ENCODE measurements at regions of chr12 and their contacts with region 1.

Region 1: DNA sequence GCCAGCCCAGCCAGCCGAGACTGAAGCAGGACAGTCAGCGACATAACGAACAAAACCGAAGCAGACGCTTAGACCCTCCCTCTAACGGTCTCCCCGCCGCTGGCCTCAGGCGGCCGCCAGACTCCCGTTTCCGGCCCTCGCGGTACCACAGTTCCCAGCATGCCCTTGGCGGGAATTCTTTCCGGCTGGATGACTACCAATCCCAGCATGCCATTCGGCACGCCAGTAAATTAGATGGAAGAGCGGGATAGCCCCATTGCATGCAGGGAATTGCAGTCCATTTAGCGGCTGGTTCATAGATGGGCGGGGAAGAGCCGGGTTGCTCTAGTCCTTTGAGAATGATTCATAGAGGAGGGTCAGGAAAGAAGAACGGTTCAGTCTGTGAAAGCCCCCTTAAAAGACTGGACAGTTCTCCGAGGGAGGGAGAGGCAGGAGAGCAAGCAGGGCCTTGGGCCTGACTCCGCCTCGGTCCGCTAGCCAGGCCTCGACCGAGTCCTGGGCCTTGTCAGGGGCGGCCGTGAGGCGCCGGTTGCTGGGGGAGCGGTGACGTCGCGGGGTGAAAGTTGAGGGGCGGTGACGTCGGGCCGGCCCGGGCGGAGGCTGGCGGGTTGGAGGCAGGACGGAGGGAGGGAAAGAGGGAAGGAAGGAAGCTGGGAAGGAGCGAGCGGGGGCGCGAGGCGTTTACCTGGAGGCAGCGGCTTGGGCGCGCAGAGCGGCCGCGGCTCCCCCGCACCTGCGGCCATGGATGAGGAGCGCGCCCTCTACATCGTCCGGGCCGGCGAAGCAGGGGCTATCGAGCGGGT is at the start of gene RIC8B:
- DNase-seq: peak; percentile 92
- H3K4me3 Mint-ChIP-seq: peak within 1 kb of the TSS; percentile 99
- H3K27ac Mint-ChIP-seq: peak within 1 kb of the TSS; percentile 97
- H3K4me1 Mint-ChIP-seq: peaks cover 22% of the 10 kb centered on the region
- H3K27me3 Mint-ChIP-seq: no peaks in the 10 kb centered on the region
- total RNA-seq, gene RIC8B: 7.3 to 8.1 TPM

Region 2: GRCh38 chr12:106302401-106303201 is 471.6 kb before region 1 on chr12 and contains the start of gene TCP11L2:
- CTCF ChIA-PET with region 1: no interaction called
- intact Hi-C with region 1: loop called (anchors 1 kb)
- DNase-seq: peak; percentile 88
- H3K4me3 Mint-ChIP-seq: peak within 1 kb of the TSS; percentile 93
- H3K27ac Mint-ChIP-seq: peak within 1 kb of the TSS; percentile 99
- H3K4me1 Mint-ChIP-seq: peaks cover 55% of the 10 kb centered on the region
- H3K27me3 Mint-ChIP-seq: no peaks in the 10 kb centered on the region
- total RNA-seq, gene TCP11L2: 9.2 to 10.3 TPM

Region 3: GRCh38 chr12:106747973-106748436 is 26.2 kb before region 1 on chr12:
- CTCF ChIA-PET with region 1: no interaction called
- intact Hi-C with region 1: loop called (anchors 1 kb)
- DNase-seq: peak; percentile 63
- H3K4me3 Mint-ChIP-seq: peak overlapping the region; percentile 12
- H3K27ac Mint-ChIP-seq: peak overlapping the region; percentile 90
- H3K4me1 Mint-ChIP-seq: peaks cover 32% of the 10 kb centered on the region
- H3K27me3 Mint-ChIP-seq: no peaks in the 10 kb centered on the region

Region 4: DNA sequence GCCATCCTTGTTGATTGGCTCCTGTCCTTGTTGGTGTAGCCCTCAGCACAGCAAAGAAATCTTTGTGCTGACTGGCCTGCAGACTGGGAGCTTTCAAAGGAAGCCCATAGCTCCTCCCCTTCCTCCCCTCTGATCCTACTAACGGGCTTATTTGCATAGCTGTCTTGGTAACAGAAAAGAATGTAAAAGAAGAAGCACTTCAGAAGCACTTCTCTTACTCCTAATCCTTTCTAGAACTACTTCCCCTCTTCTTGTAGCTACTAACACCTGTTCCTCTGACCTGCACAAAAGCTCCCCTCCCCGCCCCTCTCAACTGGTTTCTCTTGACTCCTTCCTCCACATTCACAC is 14.0 kb before region 1 on chr12:
- CTCF ChIA-PET with region 1: interaction called, 5 read pairs
- intact Hi-C with region 1: loop called (anchors 1 kb)
- DNase-seq: peak; percentile 63
- H3K4me3 Mint-ChIP-seq: peak overlapping the region; percentile 76
- H3K27ac Mint-ChIP-seq: peak overlapping the region; percentile 94
- H3K4me1 Mint-ChIP-seq: peaks cover 18% of the 10 kb centered on the region
- H3K27me3 Mint-ChIP-seq: no peaks in the 10 kb centered on the region

Region 5: DNA sequence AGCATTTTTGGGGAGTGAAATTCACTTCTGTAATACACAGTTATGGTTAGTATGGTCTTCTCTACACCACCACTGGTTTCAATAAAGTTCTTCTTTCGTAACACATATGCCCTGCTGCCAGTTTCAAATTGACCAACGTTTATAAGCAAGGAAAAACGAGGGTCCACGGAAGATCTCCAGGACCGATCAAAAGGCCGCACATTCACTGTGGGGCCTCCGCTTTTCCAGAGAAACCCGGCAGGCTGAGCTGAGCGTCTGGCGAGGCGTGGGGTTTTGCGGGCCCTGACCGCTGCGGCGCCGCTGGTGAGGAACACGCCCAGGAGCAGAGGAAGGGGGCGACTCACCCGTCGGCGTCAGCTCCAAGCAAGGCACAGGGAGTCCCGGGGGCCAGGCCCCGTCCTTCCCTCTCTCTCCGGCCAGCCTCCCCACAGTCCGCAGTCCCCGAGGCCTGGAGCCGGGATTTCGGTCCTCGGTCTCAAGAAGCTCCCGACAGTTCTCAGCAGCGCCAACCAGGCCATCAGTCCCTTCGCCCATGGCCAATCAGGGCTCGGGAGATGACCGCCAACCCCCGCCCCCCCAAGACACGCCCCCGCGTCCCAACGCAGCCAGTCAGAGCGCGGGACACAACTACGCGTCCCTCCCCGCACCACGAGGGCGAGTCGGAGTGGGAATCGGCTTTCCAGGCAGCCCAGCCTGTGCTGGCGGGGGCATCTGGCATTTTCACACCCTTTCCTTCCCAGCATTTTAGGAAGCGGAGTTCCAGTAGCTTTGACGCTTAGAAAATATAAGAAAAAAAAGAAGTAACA is 212.6 kb after region 1 on chr12 and contains the start of gene MTERF2:
- CTCF ChIA-PET with region 1: no interaction called
- intact Hi-C with region 1: loop called (anchors 2 kb)
- DNase-seq: peak; percentile 88
- H3K4me3 Mint-ChIP-seq: peak within 1 kb of the TSS; percentile 90
- H3K27ac Mint-ChIP-seq: peak within 1 kb of the TSS; percentile 70
- H3K4me1 Mint-ChIP-seq: peaks cover 36% of the 10 kb centered on the region
- H3K27me3 Mint-ChIP-seq: no peaks in the 10 kb centered on the region
- total RNA-seq, gene MTERF2: 5.2 to 6.5 TPM

Measured in activated naive CD4-positive, alpha-beta T cell treated with anti-CD3 and anti-CD28 coated beads for 36 hours (primary cell).